Activated naive CD4-positive, alpha-beta T cell treated with anti-CD3 and anti-CD28 coated beads, Interleukin-2, amount 10 ng/mL, durations not matched to agents 7 days and 5 days (primary cell): ENCODE measurements at regions of chr14 and their contacts with region 1.

Region 1: GRCh38 chr14:77151918-77152588 is 10.5 kb upstream of the ZDHHC22 start:
- DNase-seq: no peak
- H3K4me3 Mint-ChIP-seq: no peak overlapping the region
- H3K27ac Mint-ChIP-seq: no peak overlapping the region
- H3K4me1 Mint-ChIP-seq: no peaks in the 10 kb centered on the region
- H3K27me3 Mint-ChIP-seq: peaks cover 52% of the 10 kb centered on the region

Region 2: DNA sequence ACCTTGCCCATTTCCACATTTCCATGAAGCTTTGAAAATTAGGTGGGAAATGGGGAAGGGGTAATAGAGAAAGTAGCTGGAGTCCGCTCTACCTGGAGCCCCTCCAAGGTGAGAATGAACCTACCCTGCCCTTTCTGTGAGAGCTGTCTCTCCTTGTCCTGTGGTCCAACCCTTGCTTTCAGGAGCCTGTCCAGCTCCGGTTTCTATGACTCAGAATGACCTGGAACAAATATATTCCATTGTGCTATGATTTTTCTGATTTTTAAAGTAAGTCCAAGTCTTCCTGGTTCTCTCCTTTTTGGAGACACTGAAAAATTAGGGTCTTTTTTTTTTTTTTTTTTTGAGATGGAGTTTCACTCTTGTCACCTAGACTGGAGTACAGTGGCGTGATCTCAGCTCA is 479.9 kb before region 1 on chr14:
- CTCF ChIA-PET with region 1: no interaction called
- DNase-seq: no peak
- H3K4me3 Mint-ChIP-seq: no peak overlapping the region
- H3K27ac Mint-ChIP-seq: no peak overlapping the region
- H3K4me1 Mint-ChIP-seq: no peaks in the 10 kb centered on the region
- H3K27me3 Mint-ChIP-seq: peaks cover 21% of the 10 kb centered on the region

Region 3: DNA sequence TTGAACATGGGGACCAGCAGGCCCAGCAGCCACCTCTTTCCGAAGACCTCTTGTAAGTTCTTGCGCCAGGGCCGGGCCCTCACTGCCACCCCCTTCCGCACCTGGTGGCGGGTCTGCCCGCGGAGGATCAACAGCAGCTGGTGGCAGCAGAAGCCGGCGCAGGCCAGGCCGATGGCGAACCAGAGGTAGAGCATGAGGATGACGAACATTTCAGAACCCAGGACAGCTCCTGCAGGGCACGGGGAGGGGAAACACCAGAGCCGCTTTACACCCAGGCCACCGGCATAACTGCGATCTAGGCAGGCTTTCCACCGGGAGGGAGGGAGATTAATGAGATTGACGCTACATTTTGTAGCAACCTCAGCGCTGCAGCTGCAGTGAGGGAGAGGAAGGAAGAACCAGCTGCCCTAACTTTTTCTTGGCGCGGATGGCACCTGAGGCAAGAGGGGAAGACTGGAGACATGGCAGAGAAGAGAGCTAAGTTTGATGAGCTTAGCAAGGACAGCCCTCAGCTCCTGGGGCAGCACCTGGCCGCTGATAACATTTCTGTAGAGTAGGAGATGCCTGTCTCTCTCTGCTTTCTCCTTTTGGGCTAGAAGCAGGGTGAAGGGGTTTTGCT is 18.2 kb before region 1 on chr14:
- CTCF ChIA-PET with region 1: interaction called, 44 read pairs
- DNase-seq: peak; percentile 87
- H3K4me3 Mint-ChIP-seq: no peak overlapping the region
- H3K27ac Mint-ChIP-seq: no peak overlapping the region
- H3K4me1 Mint-ChIP-seq: no peaks in the 10 kb centered on the region
- H3K27me3 Mint-ChIP-seq: peaks cover 95% of the 10 kb centered on the region

Region 4: GRCh38 chr14:77139540-77140358 is 12.3 kb before region 1 on chr14:
- CTCF ChIA-PET with region 1: interaction called, 44 read pairs
- DNase-seq: peak; percentile 61
- H3K4me3 Mint-ChIP-seq: no peak overlapping the region
- H3K27ac Mint-ChIP-seq: no peak overlapping the region
- H3K4me1 Mint-ChIP-seq: peaks cover 16% of the 10 kb centered on the region
- H3K27me3 Mint-ChIP-seq: peaks cover 94% of the 10 kb centered on the region

Region 5: GRCh38 chr14:77212943-77213678 is 61.1 kb after region 1 on chr14:
- CTCF ChIA-PET with region 1: interaction called, 26 read pairs
- DNase-seq: peak; percentile 57
- H3K4me3 Mint-ChIP-seq: no peak overlapping the region
- H3K27ac Mint-ChIP-seq: no peak overlapping the region
- H3K4me1 Mint-ChIP-seq: no peaks in the 10 kb centered on the region
- H3K27me3 Mint-ChIP-seq: peaks cover 27% of the 10 kb centered on the region

Region 6: DNA sequence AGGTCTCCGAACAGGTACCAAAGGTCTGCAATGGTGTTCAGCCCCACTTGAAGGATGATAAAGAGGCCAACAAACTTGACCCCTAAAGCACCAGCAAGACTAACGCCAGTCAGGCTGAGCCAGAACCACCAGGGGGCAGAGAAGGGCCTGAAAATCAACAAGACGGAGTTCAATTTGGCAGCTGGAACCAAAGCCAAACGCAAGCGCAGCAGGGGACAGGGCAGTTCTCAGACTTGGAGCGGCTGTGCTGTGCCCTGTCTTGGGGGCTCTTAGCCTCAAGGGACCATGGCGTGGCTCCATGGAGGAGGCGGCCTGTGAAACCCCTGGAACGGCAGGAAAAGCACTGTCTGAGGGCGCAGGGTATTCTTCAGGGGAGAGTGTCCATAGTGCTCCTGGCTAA is 149.1 kb after region 1 on chr14:
- CTCF ChIA-PET with region 1: interaction called, 12 read pairs
- DNase-seq: peak; percentile 78
- H3K4me3 Mint-ChIP-seq: no peak overlapping the region
- H3K27ac Mint-ChIP-seq: no peak overlapping the region
- H3K4me1 Mint-ChIP-seq: peaks cover 8% of the 10 kb centered on the region
- H3K27me3 Mint-ChIP-seq: no peaks in the 10 kb centered on the region

Region 7: GRCh38 chr14:77314043-77314442 is 162.0 kb after region 1 on chr14:
- CTCF ChIA-PET with region 1: interaction called, 102 read pairs
- DNase-seq: no peak
- H3K4me3 Mint-ChIP-seq: no peak overlapping the region
- H3K27ac Mint-ChIP-seq: no peak overlapping the region
- H3K4me1 Mint-ChIP-seq: peaks cover 4% of the 10 kb centered on the region
- H3K27me3 Mint-ChIP-seq: no peaks in the 10 kb centered on the region